Mammary epithelial cell (primary cell): ENCODE measurements at regions of chr3 and their contacts with region 1.

Region 1: GRCh38 chr3:179768080-179768479 is 115.2 kb downstream of the USP13 start:
- DNase-seq: peak; percentile 47
- H3K4me3 ChIP-seq: no peak overlapping the region
- H3K27ac ChIP-seq: no peak overlapping the region
- H3K4me1 ChIP-seq: no peaks in the 10 kb centered on the region
- H3K27me3 ChIP-seq: no peaks in the 10 kb centered on the region
- CTCF ChIP-seq: peak; percentile 61 to 73

Region 2: DNA sequence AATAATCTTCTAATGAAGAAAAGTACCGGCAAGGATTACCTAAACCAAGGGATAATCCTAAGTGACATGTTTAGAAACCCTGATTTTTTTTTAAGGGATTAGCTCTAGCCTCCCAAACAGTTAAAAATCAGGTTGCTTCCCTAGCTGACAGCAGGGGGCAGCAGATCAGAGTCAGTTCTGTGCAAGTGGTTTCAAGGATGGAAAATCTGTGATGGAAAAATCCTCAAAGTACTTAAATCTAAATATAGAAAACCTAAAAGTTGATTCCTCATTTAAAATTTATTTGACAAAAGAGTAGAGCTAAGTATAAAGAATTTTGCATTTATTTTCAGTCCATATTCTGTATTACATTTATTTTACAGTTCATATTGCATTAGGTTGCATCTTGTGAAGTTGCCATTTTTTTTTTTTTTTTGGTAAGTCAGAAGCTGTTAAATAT is 161.0 kb after region 1 on chr3:
- CTCF ChIA-PET with region 1: no interaction called
- dilution Hi-C with region 1: no loop called
- in situ Hi-C with region 1: no loop called
- intact Hi-C with region 1: loop called (anchors 5 kb)
- DNase-seq: peak; percentile 30
- H3K4me3 ChIP-seq: no peak overlapping the region
- H3K27ac ChIP-seq: no peak overlapping the region
- H3K4me1 ChIP-seq: no peaks in the 10 kb centered on the region
- H3K27me3 ChIP-seq: no peaks in the 10 kb centered on the region
- CTCF ChIP-seq: peak; percentile 78 to 81

Region 3: DNA sequence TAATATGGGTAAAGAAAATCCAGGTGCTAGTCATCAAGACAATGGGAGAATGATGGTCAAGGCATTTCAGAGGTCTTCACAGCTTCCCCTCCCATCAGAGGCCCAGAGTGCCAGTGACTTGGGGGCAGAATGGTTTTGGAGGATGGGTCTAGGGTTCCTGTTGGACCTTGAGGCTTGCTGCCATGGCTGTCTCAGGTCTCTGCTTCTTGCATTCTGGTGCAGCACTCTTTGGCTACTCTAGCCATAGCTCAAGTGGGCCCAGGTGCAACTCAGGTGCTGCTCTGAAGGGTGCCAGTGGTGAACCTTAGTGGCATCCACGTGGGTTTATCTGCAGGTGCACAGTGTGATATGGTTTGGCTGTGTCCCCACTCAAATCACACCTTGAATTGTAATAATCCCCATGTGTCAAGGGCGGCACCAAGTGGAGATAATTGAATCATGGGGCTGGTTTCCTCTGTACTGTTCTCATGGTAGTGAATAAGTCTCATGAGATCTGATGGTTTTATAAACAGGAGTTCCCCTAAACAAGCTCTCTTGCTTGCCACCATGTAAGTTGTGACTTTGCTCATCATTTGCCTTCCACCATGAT is 317.1 kb after region 1 on chr3:
- CTCF ChIA-PET with region 1: no interaction called
- dilution Hi-C with region 1: no loop called
- in situ Hi-C with region 1: no loop called
- intact Hi-C with region 1: loop called (anchors 10 kb)
- DNase-seq: no peak
- H3K4me3 ChIP-seq: no peak overlapping the region
- H3K27ac ChIP-seq: no peak overlapping the region
- H3K4me1 ChIP-seq: no peaks in the 10 kb centered on the region
- H3K27me3 ChIP-seq: no peaks in the 10 kb centered on the region
- CTCF ChIP-seq: no peak